Activated CD8-positive, alpha-beta memory T cell treated with anti-CD3 and anti-CD28 coated beads, Interleukin-2, amount 10 ng/mL, durations not matched to agents 7 days and 5 days (primary cell): ENCODE measurements at regions of chr7 and their contacts with region 1.

Region 1: DNA sequence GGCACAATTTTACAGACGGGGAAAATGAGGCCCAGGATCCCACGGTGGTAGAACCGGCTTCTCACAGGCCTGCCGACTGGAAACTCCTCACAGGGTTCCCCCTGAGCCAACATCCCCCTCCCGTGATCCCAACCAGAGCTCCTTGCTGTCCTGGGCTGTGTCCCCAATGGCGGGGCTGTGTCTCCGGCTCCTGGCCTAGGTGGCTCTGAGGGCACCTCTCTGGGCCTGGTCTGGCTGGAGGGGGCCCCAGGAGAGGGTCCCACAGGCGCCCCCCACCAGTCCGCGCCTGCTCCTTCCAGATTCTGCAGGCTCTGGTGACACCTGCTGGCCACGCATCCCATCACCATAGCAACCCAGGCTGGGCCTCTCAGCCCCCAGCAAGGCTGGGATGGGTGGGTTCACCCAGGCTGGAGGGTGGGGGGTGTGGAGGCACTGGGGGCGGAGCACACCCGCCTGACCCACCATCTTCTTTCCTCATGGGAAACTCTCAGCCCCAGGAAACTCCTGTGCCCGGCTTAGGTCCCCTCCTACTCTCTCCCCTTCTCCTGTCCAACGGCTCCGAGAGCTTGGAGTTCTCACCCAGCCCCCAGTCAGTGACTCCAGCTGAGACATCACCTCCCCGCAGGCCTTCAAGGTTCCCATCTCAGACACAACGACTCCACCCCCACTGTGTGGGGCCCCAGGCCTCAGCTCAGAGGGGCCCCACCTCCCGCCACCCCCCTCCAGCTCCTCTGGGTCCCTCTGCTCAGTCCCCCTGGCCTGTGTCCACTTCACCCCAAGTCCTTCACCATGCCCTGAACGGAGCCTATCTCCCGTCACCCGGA is 27.1 kb upstream of the TNRC18 start:
- DNase-seq: peak; percentile 52
- ATAC-seq: peak; percentile 49
- H3K4me3 Mint-ChIP-seq: no peak overlapping the region
- H3K27ac Mint-ChIP-seq: no peak overlapping the region
- H3K4me1 Mint-ChIP-seq: no peaks in the 10 kb centered on the region
- H3K27me3 Mint-ChIP-seq: no peaks in the 10 kb centered on the region

Region 2: GRCh38 chr7:5237286-5237685 is 213.5 kb before region 1 on chr7:
- CTCF ChIA-PET with region 1: interaction called, 36 read pairs
- DNase-seq: no peak
- ATAC-seq: no peak
- H3K4me3 Mint-ChIP-seq: no peak overlapping the region
- H3K27ac Mint-ChIP-seq: no peak overlapping the region
- H3K4me1 Mint-ChIP-seq: peaks cover 22% of the 10 kb centered on the region
- H3K27me3 Mint-ChIP-seq: peaks cover 24% of the 10 kb centered on the region

Region 3: DNA sequence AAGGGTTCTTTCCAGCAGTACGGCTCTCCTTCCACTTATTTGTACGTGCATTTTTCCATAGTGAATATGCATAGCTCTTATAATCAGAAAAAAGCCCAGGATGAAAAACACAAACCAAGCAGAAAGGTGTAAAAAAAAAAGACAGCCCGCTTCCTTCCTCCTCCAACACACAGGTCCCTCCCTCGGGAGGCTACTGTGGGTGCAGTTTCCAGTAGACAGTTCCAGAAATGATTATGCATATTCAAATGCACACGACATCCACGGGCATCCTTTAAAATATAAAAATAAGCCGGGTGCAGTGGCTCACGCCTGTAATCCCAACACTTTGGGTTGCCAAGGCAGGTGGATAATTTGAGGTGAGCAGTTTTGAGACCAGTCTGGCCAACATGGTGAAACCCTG is 87.0 kb before region 1 on chr7:
- CTCF ChIA-PET with region 1: interaction called, 19 read pairs
- DNase-seq: peak; percentile 56
- ATAC-seq: peak; percentile 66
- H3K4me3 Mint-ChIP-seq: no peak overlapping the region
- H3K27ac Mint-ChIP-seq: peak overlapping the region; percentile 45
- H3K4me1 Mint-ChIP-seq: peaks cover 27% of the 10 kb centered on the region
- H3K27me3 Mint-ChIP-seq: no peaks in the 10 kb centered on the region